GM12878 (cell line): ENCODE measurements at regions of chr2 and their contacts with region 1.

Region 1: DNA sequence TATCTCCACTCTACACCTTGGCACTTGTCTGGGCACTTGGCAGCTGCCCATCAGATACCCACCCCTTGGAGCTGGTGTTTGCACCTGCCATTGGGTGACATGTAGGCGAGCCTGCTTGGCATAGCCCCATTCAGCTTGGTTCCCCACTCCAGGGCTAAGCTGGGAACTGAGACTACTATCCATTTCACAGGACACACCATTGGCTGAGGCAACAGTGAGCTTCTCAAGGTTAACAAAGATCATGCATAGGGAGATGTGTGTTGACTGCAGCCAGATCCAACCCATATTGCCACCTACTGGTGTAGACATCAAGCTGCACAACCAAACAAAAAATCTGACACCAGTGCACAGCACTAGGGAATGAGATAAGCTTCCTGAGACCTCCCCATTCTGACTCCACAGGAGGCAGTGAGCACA is 1389.8 kb upstream of the TMEFF2 start:
- DNase-seq: no peak
- ATAC-seq: peak; percentile 94
- H3K4me3 ChIP-seq: no peak overlapping the region
- H3K27ac ChIP-seq: no peak overlapping the region
- H3K4me1 ChIP-seq: no peaks in the 10 kb centered on the region
- H3K27me3 ChIP-seq: no peaks in the 10 kb centered on the region
- CTCF ChIP-seq: peak; percentile 53 to 64 (median 58); a peak in 4 of 6 replicates
- EP300 ChIP-seq: no peak
- POLR2A ChIP-seq: no peak
- RAD21 ChIP-seq: peak; percentile 66

Region 2: DNA sequence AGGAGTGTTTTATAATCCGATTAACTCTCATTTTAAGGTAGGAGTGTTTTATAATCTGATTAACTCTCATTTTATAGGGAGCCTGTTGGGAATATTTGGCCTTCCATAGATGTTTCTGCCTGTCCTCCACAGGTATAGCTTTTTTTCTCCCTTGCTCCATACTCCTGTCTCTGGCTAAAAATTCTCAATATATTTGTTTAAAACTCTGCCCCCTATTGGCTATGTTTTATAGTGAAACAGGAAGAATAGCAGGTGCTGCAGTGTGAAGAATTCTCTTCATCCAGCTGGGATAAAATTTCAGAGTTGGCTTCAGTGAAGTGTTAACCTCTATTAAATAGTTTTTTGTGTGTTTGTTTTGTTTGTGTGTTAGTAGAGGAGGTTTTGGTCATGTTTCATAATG is 343.8 kb before region 1 on chr2:
- CTCF ChIA-PET with region 1: interaction called, 7 read pairs
- POLR2A ChIA-PET with region 1: no interaction called
- RAD21 ChIA-PET with region 1: interaction called, 8 read pairs
- SMC1A ChIA-PET with region 1: interaction called, 11 read pairs
- in situ Hi-C with region 1: no loop called
- intact Hi-C with region 1: no loop called
- DNase-seq: no peak
- ATAC-seq: peak; percentile 66
- H3K4me3 ChIP-seq: no peak overlapping the region
- H3K27ac ChIP-seq: no peak overlapping the region
- H3K4me1 ChIP-seq: no peaks in the 10 kb centered on the region
- H3K27me3 ChIP-seq: no peaks in the 10 kb centered on the region
- CTCF ChIP-seq: peak in 2 of 3 experiments; percentile 18 to 31; a peak in 3 of 6 replicates
- EP300 ChIP-seq: no peak
- POLR2A ChIP-seq: no peak
- RAD21 ChIP-seq: peak; percentile 20; the same call in 1 of the 2 replicates

Region 3: DNA sequence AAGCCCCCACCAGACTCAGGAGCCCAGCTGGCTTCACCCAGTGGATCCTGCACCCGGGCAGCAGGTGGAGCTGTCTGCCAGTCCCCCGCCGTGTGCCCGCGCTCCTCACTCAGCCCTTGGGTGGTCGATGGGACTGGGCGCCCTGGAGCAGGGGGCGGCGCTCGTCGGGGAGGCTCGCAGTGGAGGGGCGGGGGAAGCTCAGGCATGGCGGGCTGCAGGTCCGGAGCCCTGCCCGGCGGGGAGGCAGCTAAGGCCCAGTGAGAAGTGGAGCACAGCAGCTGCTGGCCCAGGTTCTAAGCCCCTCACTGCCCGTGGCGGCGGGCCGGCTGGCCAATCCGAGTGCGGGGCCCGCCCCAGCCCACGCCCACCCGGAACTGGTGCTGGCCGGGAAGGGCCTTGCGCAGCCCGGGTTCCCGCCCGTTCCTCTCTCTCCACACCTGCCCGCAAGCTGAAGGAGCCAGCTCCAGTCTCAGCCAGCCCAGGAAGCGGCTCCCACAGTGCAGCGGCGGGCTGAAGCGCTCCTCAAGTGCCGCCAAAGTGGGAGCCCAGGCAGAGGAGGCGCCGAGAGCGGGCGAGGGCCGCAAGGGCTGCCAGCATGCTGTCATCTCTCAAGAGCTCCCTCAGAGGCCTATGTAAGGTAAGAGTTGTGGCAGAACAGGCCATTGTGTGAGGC is 82.0 kb before region 1 on chr2:
- CTCF ChIA-PET with region 1: interaction called, 11 read pairs
- POLR2A ChIA-PET with region 1: interaction called, 7 read pairs
- RAD21 ChIA-PET with region 1: interaction called, 4 read pairs
- SMC1A ChIA-PET with region 1: interaction called, 5 read pairs
- in situ Hi-C with region 1: no loop called
- intact Hi-C with region 1: no loop called
- DNase-seq: no peak
- ATAC-seq: no peak
- H3K4me3 ChIP-seq: no peak overlapping the region
- H3K27ac ChIP-seq: no peak overlapping the region
- H3K4me1 ChIP-seq: no peaks in the 10 kb centered on the region
- H3K27me3 ChIP-seq: no peaks in the 10 kb centered on the region
- CTCF ChIP-seq: no peak
- EP300 ChIP-seq: no peak
- POLR2A ChIP-seq: no peak
- RAD21 ChIP-seq: no peak